Left ventricle myocardium superior (tissue), 1 donor: ENCODE measurements at regions of chr12 and their contacts with region 1.

Region 1: GRCh38 chr12:59149997-59150642 is 229.8 kb upstream of the LRIG3 start:
- DNase-seq: no peak
- ATAC-seq: peak; percentile 91

Region 2: GRCh38 chr12:58346032-58346632 is 804.0 kb before region 1 on chr12:
- intact Hi-C with region 1: loop called (anchors 5 kb)
- DNase-seq: no peak
- ATAC-seq: no peak

Region 3: GRCh38 chr12:58540480-58541299 is 609.4 kb before region 1 on chr12:
- intact Hi-C with region 1: loop called (anchors 10 kb)
- DNase-seq: peak; percentile 63
- ATAC-seq: peak; percentile 87

Region 4: DNA sequence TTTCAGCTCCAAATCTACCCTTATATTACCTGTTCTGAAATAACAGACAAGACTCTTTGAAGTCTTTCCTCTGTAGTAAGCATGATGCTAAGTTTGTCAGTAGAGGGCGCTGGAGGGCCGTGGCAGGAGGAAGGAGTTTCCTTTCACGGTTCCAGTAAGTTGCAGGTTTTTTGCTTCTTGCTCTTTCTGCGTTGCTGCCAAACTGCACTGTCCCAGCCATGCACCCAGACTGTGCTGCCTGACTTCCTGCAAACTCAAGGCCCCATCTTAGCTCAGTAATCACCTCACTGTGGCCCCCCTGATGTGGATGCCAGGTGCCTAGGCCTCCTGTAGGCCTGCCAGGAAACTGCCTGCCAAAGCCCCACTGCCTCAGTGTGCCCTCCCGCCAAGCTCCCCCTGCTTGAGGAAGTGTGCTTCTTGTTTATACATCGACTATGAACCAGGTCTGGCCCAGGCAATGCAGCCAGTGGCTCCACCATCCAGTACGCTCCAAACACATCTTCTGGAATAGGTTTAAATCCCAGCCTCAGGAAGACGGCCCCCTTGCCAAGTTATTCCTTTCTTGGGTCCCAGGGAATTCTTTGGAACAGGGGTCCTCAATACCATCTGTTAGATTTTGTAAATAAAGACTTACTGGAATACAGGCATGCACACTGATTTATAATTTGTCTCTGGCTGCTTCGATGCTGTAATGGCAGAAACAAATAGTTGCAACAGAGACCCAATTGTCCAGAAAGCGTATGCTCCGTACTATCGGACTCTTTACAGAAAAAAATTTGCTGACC is 36.1 kb before region 1 on chr12:
- intact Hi-C with region 1: loop called (anchors 5 kb)
- DNase-seq: peak; percentile 55
- ATAC-seq: peak; percentile 73